ENCODE measurements at regions of chr10 and their contacts with region 1.

Region 1: DNA sequence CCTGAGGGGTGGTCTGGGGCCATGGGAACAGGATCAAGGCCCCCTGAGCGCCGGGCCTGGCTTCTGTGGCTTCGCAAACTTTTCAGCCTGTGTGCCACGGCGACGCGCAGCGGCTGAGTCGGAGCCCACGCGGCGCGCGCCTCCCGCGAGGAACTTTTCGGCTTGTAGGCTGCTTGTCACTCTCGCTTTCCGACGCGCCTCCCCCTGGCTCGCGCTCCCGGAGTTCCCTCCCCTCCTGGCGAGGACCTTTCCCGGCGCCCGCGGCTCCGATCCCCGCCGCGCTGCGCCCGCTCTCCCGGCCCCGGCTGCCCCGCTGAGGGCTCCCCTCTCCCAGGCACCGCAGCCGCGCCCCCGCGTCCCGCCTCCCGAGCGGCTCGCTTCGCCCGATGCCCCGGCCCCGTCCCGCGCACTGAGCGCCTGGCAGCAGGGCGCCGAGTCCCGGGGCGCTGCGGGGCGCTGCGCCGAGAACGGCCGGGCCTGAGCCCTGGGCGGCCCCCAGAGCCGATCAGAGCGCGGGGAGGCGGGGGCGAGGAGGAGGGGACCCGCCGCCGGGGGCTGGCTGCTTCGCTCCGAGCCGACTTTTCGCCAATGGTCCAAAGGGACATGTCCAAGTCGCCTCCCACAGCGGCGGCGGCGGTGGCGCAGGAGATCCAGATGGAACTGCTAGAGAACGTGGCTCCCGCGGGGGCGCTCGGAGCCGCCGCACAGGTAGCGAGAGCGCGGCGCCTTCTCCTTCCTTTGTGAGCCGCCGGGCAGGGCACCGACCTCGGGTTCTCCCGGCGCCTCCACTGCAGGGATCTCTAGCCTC is at the start of gene CACNB2:
- DNase-seq: no peak
- H3K4me3 ChIP-seq: peak within 1 kb of the TSS; percentile 76 to 88 (median 82)
- H3K27ac ChIP-seq: peak within 1 kb of the TSS; percentile 96 to 98 (median 97)
- H3K4me1 ChIP-seq: peaks cover 20 to 42% (median 41%) of the 10 kb centered on the region in 4 donors
- H3K27me3 ChIP-seq: peaks cover 0 to 14% (median 0%) of the 10 kb centered on the region in 4 donors
- CTCF ChIP-seq: peak; percentile 8 to 22 (median 11)
- EP300 ChIP-seq: no peak
- POLR2A ChIP-seq: peak; percentile 26
- total RNA-seq, gene CACNB2: 73.5 to 108 (median 87.2) TPM

Region 2: DNA sequence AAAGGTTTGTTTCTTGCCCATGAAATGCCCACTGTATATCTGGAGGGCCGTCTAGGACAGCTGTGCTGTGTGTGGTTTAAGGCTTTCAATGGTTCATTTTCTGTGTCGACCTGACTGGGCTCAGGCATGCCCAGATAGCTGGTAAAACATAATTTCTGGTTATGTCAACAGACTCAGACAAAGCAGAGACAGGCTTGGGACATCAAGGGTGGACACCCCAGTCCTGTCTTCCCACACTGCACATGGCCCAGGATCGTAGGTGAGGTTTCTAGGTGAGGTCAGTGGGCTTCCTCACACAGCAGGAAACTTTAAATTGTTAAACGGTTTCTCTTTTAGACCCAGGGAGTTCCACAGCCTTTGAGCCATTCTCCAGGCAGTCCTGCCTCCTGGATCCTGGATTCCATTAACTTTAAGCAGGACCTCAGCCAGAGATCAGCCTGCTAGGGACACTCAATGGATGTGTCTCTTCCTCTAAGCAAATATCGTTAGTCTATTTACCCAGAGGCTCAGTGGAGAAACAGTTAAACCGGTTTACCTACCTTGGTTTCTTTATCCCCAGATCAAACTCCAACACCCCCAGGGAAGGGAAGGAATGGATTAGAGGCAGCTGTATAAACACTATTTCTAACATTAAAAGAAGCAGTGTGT is 752.4 kb before region 1 on chr10:
- intact Hi-C with region 1: no loop called
- DNase-seq: no peak
- H3K4me3 ChIP-seq: no peak overlapping the region
- H3K27ac ChIP-seq: no peak overlapping the region
- H3K4me1 ChIP-seq: peaks cover 0 to 19% (median 8%) of the 10 kb centered on the region in 4 donors
- H3K27me3 ChIP-seq: no peaks in the 10 kb centered on the region
- CTCF ChIP-seq: no peak
- EP300 ChIP-seq: no peak
- POLR2A ChIP-seq: no peak

Region 3: GRCh38 chr10:18204039-18204835 is 63.9 kb after region 1 on chr10:
- intact Hi-C with region 1: loop called (anchors 5 kb)
- DNase-seq: no peak
- H3K4me3 ChIP-seq: peak overlapping the region in 2 of 4 donors; percentile 28 to 31
- H3K27ac ChIP-seq: peak overlapping the region; percentile 76 to 84 (median 80)
- H3K4me1 ChIP-seq: peaks cover 7 to 64% (median 60%) of the 10 kb centered on the region in 4 donors
- H3K27me3 ChIP-seq: no peaks in the 10 kb centered on the region
- CTCF ChIP-seq: no peak
- EP300 ChIP-seq: no peak
- POLR2A ChIP-seq: no peak

Region 4: DNA sequence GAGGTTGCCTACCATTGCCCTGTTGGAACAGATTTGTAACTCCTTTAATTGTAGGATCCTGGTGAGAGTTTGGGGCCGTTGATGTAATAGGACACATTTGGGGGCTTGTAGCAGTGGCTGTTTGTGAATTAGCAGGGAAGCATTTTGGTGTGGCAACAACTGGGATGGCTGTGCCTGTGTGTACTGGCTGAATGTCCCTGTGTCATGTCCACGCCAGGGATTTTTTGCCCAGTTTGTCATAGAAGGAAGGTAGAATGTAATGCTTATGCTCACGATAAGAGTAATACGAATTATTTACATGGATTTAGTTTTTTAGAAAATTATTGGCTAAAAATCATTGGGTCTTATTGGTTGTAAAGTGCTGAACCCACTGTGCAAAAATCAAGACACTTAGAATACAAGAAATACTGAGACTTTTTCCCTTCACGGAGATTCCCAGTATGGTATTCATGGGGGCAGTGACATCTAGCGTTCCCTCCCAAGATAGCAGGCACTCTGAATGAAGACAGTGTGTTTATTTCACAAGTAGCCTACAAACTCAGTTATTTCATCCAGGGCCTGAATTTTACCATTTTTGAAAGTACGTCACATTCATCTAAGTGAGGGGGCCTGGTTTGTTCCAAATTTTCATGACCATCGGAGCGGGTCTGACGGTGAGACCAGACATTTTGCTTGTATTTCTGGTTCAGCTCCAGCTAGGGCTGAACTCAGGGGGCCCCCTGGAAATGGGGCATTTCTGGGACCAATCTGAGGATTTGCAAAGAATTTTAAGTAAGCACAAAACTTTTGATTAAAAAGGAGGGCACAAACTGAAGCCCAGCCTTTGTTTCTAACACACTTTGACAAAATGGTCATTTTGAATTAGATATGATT is 74.6 kb after region 1 on chr10:
- intact Hi-C with region 1: loop called (anchors 5 kb)
- DNase-seq: no peak
- H3K4me3 ChIP-seq: peak overlapping the region in 1 of 4 donors; percentile 16
- H3K27ac ChIP-seq: peak overlapping the region in 2 of 4 donors; percentile 10 to 21
- H3K4me1 ChIP-seq: peaks cover 14 to 93% (median 91%) of the 10 kb centered on the region in 4 donors
- H3K27me3 ChIP-seq: no peaks in the 10 kb centered on the region
- CTCF ChIP-seq: peak; percentile 78 to 86 (median 84)
- EP300 ChIP-seq: no peak
- POLR2A ChIP-seq: no peak

Measured in esophagus muscularis mucosa (tissue), 4 donors.